ENCODE measurements at regions of chr19 and their contacts with region 1.

Region 1: GRCh38 chr19:16628183-16628983 is at the start of gene MED26:
- DNase-seq: peak; percentile 96 to 99 (median 98)
- ATAC-seq: peak; percentile 93 to 97
- H3K4me3 ChIP-seq: peak within 1 kb of the TSS; percentile 96
- H3K27ac ChIP-seq: peak within 1 kb of the TSS; percentile 71
- H3K4me1 ChIP-seq: peaks cover 4% of the 10 kb centered on the region
- H3K27me3 ChIP-seq: no peaks in the 10 kb centered on the region
- total RNA-seq, gene MED26: 5.3 to 6.1 (median 5.6) TPM

Region 2: DNA sequence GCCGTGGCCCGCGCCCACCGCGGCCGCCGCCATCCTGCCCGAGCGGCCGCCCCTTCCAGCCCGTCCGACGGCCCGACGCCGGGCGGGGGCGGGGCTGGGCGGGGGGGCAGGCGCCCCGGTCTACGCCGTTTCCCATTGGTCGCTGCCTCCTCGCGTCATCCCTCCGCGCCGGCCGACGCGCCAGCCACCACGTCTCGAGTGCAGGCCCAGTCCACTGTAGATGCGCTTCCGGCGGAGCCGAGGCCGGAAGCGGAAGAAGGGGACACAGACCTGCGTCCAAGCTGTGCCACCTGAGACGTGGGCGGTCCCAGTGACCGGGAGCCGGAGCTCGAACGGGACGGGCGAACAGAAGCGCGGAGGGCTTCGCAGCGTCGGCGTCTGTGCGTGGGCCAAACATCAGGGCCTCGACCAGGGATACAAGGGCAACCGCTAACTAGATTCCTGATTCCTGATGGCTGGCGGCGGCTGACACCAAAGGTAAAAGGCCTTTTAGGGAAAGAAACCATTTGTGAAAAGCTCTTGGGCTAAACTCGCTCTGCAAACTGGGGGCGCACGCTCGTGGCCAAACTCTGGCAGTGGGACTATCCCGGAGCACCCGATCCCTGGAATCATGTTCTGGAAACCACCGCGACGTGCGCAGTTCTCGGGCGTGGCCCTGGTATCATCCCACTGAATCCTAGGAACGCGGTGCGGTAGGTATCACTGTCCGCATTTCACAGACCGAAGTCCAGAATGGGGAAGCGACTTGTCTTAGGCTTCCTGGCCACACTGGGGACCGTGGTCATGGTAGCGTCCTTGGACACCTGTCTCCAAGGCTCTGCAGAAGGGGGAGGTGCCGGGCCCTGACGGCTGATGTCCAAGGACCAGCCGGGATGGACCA is 55.8 kb before region 1 on chr19 and contains the start of gene SLC35E1:
- intact Hi-C with region 1: loop called in 2 of 4 experiments (anchors 5 to 10 kb)
- DNase-seq: peak; percentile 97 to 98 (median 98)
- ATAC-seq: peak; percentile 97
- H3K4me3 ChIP-seq: peak within 1 kb of the TSS; percentile 86
- H3K27ac ChIP-seq: peak within 1 kb of the TSS; percentile 81
- H3K4me1 ChIP-seq: peaks cover 8% of the 10 kb centered on the region
- H3K27me3 ChIP-seq: no peaks in the 10 kb centered on the region
- total RNA-seq, gene SLC35E1: 21.0 to 26.6 (median 25.8) TPM

Region 3: DNA sequence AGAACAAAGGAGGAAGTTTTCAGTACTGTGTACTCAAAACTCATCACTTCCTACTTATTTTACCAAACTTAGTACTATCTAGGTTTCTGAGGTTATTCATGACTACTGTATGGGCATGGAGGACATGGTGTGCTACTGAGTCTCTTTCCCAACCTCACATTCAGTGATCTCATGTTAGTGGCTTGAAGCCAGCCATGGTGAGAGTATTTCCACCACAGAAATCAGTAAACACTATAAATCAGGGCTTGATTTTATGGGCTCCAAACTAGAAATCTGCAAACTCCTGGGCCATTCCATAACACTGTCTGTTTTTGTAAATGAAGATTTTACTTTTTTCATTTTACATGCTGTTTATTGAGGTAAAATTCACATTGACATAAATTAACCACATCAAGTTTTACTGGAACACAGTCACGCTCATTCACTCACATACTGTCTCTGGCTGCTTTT is 20.1 kb before region 1 on chr19:
- intact Hi-C with region 1: no loop called
- DNase-seq: no peak
- ATAC-seq: peak; percentile 79 to 84
- H3K4me3 ChIP-seq: no peak overlapping the region
- H3K27ac ChIP-seq: peak overlapping the region; percentile 79
- H3K4me1 ChIP-seq: peaks cover 30% of the 10 kb centered on the region
- H3K27me3 ChIP-seq: no peaks in the 10 kb centered on the region

Measured in right cardiac atrium (tissue), 5 donors.